Sigmoid colon (tissue), 7 donors: ENCODE measurements at regions of chr3 and their contacts with region 1.

Region 1: GRCh38 chr3:138694287-138695007 is 85.9 kb downstream of the FAIM start:
- DNase-seq: no peak
- H3K4me3 ChIP-seq: no peak overlapping the region
- H3K27ac ChIP-seq: peak overlapping the region in 2 of 4 donors; percentile 28 to 47
- H3K4me1 ChIP-seq: peaks cover 0 to 11% (median 9%) of the 10 kb centered on the region in 4 donors
- H3K27me3 ChIP-seq: no peaks in the 10 kb centered on the region
- CTCF ChIP-seq: no peak
- EP300 ChIP-seq: no peak
- POLR2A ChIP-seq: no peak

Region 2: GRCh38 chr3:138567401-138567800 is 127.0 kb before region 1 on chr3:
- intact Hi-C with region 1: no loop called
- DNase-seq: no peak
- H3K4me3 ChIP-seq: no peak overlapping the region
- H3K27ac ChIP-seq: no peak overlapping the region
- H3K4me1 ChIP-seq: no peaks in the 10 kb centered on the region
- H3K27me3 ChIP-seq: no peaks in the 10 kb centered on the region
- CTCF ChIP-seq: no peak
- EP300 ChIP-seq: no peak
- POLR2A ChIP-seq: no peak

Region 3: DNA sequence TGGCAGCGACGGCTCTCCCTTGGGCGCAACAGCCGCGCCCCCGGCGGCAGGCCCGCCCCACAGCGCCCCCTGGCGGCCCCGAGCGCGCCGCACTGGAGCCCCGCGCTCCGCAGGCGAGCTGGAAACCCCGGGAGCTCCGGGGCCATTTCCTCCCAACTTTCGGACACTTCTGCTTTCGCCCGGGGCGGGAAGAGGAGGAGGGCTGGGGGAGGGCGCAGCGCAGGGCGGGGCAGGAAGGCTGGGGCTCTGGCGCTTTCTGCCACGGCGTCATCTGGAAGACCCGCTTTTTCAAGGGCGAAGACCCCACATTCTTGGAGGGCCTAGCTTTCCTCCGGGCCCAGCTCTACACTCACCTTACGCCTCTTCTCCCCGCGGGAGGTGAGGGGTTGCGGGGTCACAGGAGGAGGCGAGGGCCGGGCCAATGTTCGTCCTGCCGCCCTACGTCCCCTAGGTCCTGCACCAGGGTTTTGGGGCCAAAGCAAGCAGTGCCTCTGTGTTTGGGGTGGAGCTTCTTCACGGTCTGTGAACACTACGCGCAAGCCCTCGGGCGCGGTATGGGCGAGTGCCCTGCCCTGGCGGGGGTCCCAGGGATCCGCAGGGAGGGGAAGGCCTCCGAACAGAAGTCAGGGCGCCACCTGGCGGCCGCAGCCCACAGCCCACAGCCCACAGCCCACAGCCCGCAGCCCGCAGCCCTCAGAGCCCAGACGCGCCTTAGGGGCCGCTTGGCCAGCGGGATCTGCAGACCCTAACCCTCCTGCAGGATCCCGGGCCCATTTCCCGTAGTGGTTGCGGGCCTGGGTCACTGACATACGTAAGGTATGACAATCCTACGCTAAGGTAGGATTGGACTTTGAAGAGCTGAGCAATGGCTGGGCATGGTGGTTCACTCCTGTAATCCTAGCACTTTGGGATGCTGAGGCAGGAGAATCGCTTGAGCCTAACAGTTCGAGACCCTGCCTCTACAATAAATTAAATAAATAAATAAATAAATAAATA is 221.4 kb after region 1 on chr3:
- intact Hi-C with region 1: loop called (anchors 2 kb)
- DNase-seq: peak; percentile 96
- H3K4me3 ChIP-seq: peak overlapping the region; percentile 63 to 82 (median 67)
- H3K27ac ChIP-seq: peak overlapping the region; percentile 89 to 96 (median 92)
- H3K4me1 ChIP-seq: peaks cover 0 to 15% (median 11%) of the 10 kb centered on the region in 4 donors
- H3K27me3 ChIP-seq: no peaks in the 10 kb centered on the region
- CTCF ChIP-seq: peak; percentile 84 to 92 (median 88)
- EP300 ChIP-seq: no peak
- POLR2A ChIP-seq: no peak